Activated CD4-positive, alpha-beta memory T cell treated with anti-CD3 and anti-CD28 coated beads for 36 hours (primary cell): ENCODE measurements at regions of chr3 and their contacts with region 1.

Region 1: DNA sequence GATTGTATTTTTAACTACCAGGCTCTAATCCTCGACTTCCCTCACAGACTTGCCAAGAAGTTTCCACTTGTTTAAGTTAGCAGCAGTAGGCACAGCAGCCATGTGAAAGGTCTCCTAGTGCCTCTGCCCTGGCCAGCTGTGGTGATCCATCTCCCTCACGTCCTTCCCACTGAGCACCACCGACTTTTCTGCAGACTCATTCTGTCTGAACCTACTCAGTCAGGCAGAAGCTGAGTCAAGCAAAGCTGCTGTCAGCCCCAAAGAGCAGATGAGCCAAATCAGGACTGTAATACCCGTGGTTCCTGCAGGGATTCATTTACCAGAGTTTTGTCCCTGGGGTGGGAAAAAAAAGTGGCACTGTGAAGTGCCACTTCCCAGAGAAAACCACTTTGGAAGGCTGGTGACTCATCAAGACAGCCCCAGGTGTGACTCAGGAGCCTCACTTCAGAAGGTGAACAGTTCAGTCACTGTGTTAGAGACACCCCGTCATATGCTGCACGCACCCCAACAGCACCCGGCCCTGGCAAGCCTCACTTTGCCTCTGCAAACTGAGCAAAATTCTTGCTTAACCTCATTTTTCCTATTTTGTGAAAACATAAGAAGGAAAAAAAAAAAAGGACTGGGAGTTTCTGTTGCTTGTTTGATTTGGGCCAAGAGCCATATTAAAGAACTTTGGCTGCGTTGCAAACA is 76.0 kb downstream of the WWTR1 start:
- DNase-seq: peak; percentile 29
- H3K4me3 Mint-ChIP-seq: no peak overlapping the region
- H3K27ac Mint-ChIP-seq: no peak overlapping the region
- H3K4me1 Mint-ChIP-seq: peaks cover 16% of the 10 kb centered on the region
- H3K27me3 Mint-ChIP-seq: peaks cover 20% of the 10 kb centered on the region

Region 2: DNA sequence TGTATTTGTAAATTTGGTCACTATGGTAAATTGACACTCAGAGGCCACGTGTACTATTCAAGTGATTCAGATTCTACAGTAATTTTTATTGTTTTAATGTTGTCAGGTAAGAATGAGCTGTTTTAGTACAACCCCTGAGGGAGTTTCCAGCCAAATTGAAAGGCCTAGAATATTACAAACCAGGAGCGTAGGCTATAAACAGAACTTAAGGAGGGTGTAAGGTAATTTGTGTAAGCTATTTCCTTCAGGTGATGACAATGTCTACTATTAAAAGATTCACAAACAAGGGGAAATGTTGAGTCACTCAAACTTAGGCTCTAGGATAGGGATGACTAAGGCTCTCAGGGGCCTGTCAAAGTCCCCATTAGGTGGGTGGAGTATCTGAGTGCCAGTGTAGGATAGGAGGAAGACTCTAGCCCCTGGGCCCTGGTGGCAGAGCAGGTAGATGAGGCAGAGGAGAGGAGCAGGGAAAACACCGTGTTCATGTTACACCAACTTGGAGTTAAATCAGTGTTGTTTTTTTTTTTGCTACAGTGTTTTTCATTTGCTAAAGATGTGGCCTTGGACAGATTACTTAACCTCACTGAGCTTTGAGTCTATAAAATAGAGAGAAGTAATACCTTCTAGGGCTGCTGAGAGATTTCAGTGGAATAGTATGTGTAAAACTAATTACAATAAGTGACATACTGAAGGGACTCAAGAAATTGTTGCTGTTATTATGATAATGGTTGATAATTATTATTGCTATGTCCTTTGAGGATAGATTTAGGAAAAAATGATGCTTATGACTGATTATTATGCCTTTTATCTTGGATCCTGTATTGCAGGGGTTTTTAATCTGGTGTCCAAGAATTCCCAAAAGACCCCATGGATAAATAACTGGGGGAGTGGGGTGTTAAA is 214.6 kb before region 1 on chr3:
- CTCF ChIA-PET with region 1: no interaction called
- POLR2A ChIA-PET with region 1: no interaction called
- intact Hi-C with region 1: no loop called
- DNase-seq: peak; percentile 33
- H3K4me3 Mint-ChIP-seq: no peak overlapping the region
- H3K27ac Mint-ChIP-seq: no peak overlapping the region
- H3K4me1 Mint-ChIP-seq: peaks cover 6% of the 10 kb centered on the region
- H3K27me3 Mint-ChIP-seq: peaks cover 4% of the 10 kb centered on the region

Region 3: GRCh38 chr3:149566292-149566975 is 15.4 kb before region 1 on chr3:
- CTCF ChIA-PET with region 1: interaction called, 19 read pairs
- POLR2A ChIA-PET with region 1: no interaction called
- intact Hi-C with region 1: no loop called
- DNase-seq: no peak
- H3K4me3 Mint-ChIP-seq: no peak overlapping the region
- H3K27ac Mint-ChIP-seq: no peak overlapping the region
- H3K4me1 Mint-ChIP-seq: no peaks in the 10 kb centered on the region
- H3K27me3 Mint-ChIP-seq: peaks cover 4% of the 10 kb centered on the region

Region 4: GRCh38 chr3:149657926-149658733 is 76.3 kb after region 1 on chr3 and contains the start of gene WWTR1:
- CTCF ChIA-PET with region 1: interaction called, 3 read pairs
- POLR2A ChIA-PET with region 1: no interaction called
- intact Hi-C with region 1: loop called (anchors 2 kb)
- DNase-seq: peak; percentile 65
- H3K4me3 Mint-ChIP-seq: peak within 1 kb of the TSS; percentile 82
- H3K27ac Mint-ChIP-seq: no peak within 1 kb of the TSS
- H3K4me1 Mint-ChIP-seq: peaks cover 9% of the 10 kb centered on the region
- H3K27me3 Mint-ChIP-seq: peaks cover 51% of the 10 kb centered on the region
- total RNA-seq, gene WWTR1: 1.0 to 1.2 TPM

Region 5: DNA sequence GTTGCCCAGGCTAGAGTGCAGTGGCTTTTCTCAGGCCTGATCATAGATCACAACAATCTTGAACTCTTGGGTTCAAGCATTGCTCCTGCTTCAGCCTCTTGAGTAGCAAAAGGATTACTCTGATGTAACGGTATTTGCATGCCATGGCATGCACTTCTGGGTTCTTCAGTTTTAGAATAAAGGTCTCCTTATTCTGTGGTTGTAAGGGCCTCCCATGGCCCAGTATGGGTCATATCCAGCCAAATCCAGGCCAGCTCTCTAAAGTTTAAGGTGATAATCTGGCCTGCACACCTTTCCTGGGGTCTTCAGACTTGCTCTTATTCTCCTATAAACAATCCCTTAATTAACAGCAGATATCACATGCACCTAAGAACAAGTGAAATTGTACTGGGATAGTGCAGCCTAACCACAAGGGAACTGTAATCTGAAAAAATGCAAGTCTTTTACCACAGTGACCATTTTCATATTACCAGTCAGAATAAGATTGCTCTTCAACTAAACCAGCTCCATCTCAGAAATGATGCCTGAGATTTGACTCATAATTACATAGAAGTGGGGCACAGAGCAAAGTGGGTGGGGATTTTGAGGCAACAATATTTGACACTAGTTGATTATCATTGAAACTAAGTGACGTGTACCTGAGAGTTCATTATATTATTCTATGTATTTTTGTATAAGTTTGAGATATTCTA is 145.0 kb after region 1 on chr3:
- CTCF ChIA-PET with region 1: no interaction called
- POLR2A ChIA-PET with region 1: interaction called, 3 read pairs
- intact Hi-C with region 1: loop called (anchors 1 kb)
- DNase-seq: peak; percentile 40
- H3K4me3 Mint-ChIP-seq: no peak overlapping the region
- H3K27ac Mint-ChIP-seq: no peak overlapping the region
- H3K4me1 Mint-ChIP-seq: peaks cover 8% of the 10 kb centered on the region
- H3K27me3 Mint-ChIP-seq: peaks cover 3% of the 10 kb centered on the region